ENCODE measurements at regions of chr22 and their contacts with region 1.

Region 1: GRCh38 chr22:32202539-32203180 is 2.2 kb downstream of the RFPL2 start:
- DNase-seq: peak; percentile 60
- H3K4me3 Mint-ChIP-seq: peak overlapping the region; percentile 70
- H3K27ac Mint-ChIP-seq: no peak overlapping the region
- H3K4me1 Mint-ChIP-seq: peaks cover 48% of the 10 kb centered on the region
- H3K27me3 Mint-ChIP-seq: peaks cover 6% of the 10 kb centered on the region

Region 2: DNA sequence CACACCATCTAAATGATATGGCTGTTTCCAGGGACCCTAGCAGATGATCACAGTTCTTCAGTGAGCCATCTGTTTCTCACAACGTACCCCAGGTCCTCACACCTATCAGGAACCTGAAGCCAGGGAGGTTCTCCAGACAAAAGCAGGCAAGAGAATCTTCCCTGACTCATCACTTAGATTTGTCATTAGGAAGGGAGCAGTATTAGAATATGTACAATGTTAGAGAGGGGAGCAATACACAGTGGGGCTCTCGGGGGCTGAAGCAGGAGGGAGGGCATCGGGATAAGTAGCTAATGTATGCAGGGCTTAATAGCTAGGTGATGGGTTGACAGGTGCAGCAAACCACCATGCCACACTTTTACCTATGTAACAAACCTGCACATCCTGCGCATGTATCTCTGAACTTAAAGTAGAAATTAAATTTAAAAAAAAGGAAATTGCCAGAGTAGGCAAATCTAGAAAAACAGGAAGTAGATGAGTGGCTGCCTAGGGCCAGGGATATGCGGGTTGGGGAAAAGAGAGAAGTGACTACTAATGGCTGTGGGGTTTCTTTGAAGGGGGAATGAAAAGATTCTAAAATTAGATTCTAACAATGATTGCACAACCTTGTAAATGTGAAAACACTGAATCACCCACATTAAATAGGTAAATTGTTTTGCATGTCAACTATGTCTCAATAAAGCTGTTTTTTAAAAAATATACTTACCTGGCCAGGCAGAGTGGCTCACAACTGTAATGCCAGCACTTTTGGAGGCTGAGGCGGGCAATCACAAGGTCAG is 58.0 kb before region 1 on chr22:
- CTCF ChIA-PET with region 1: interaction called, 4 read pairs
- POLR2A ChIA-PET with region 1: no interaction called
- intact Hi-C with region 1: loop called (anchors 2 kb)
- DNase-seq: peak; percentile 26
- H3K4me3 Mint-ChIP-seq: no peak overlapping the region
- H3K27ac Mint-ChIP-seq: peak overlapping the region; percentile 92
- H3K4me1 Mint-ChIP-seq: peaks cover 46% of the 10 kb centered on the region
- H3K27me3 Mint-ChIP-seq: no peaks in the 10 kb centered on the region

Region 3: GRCh38 chr22:32165681-32166080 is 37.0 kb before region 1 on chr22:
- CTCF ChIA-PET with region 1: no interaction called
- POLR2A ChIA-PET with region 1: no interaction called
- intact Hi-C with region 1: loop called (anchors 5 kb)
- DNase-seq: no peak
- H3K4me3 Mint-ChIP-seq: no peak overlapping the region
- H3K27ac Mint-ChIP-seq: no peak overlapping the region
- H3K4me1 Mint-ChIP-seq: peaks cover 7% of the 10 kb centered on the region
- H3K27me3 Mint-ChIP-seq: no peaks in the 10 kb centered on the region

Region 4: DNA sequence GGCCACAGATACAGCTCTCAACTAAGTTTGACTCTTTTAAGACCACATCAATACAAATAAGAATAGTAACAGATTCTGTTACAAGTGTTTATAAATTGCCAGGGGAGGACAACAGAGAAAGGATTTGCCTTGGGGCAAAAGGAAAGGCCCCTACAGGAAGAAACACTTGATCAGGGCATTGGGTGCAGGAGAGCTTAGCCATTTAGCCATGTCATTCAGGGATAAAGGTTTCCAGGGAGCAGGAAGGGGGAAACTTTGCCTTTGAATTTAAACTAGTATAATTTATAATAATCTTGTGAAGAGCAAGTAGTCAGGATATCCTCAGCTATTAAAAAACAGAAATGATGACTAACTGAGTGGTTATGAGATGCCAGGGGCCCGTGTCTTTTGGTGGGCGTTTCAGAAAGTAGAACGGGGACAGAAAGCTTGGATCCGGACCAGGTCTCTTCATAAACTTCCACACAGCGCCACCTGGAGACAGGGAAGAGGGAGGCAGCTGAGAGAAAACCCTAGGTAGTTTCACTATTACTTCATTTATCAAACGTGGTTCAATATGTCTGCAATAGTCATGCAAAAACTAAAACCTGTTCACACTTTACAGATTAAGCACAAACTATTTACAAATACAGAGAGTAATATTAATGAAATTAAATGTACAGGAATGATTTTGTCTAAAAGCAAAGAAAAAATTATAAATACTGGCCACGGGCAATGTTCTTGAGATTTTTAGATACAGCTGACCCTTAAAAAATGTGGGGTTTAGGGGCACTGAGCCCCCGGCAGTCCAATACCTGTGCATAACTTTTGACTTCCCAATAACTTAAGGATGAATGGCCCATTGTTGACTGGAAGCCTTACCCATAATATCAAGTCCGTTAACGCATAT is 63.5 kb after region 1 on chr22:
- CTCF ChIA-PET with region 1: interaction called, 12 read pairs
- POLR2A ChIA-PET with region 1: no interaction called
- intact Hi-C with region 1: loop called (anchors 5 kb)
- DNase-seq: peak; percentile 83
- H3K4me3 Mint-ChIP-seq: no peak overlapping the region
- H3K27ac Mint-ChIP-seq: no peak overlapping the region
- H3K4me1 Mint-ChIP-seq: peaks cover 9% of the 10 kb centered on the region
- H3K27me3 Mint-ChIP-seq: peaks cover 9% of the 10 kb centered on the region

Measured in activated CD4-positive, alpha-beta memory T cell treated with anti-CD3 and anti-CD28 coated beads for 36 hours (primary cell).